Astrocyte of the spinal cord (primary cell): ENCODE measurements at regions of chr2 and their contacts with region 1.

Region 1: DNA sequence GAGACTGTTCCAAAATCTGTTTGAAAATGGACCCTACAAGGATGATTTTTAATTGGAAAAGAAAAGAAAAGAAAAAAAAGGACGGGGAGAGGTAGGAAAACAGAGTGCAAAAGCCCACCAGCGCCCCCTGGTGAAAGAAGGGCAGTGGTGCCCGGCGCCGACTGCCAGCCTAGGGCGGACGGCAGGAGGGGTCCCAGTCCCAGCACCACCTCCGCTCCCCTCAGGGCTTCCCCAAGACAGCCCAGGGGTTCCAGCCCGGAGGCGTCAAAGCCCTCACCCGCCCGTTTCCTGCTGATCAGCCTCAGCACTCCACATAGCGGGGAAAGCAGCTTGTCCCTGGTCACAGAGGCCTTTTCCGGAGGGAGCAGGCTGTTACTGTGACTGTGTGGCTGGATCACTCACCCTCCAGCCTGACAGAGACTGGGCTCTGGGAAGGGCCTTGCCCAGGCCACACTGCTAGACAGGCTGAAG is 213.9 kb downstream of the TFCP2L1 start:
- DNase-seq: peak; percentile 51
- H3K4me3 ChIP-seq: no peak overlapping the region
- CTCF ChIP-seq: peak; percentile 98

Region 2: DNA sequence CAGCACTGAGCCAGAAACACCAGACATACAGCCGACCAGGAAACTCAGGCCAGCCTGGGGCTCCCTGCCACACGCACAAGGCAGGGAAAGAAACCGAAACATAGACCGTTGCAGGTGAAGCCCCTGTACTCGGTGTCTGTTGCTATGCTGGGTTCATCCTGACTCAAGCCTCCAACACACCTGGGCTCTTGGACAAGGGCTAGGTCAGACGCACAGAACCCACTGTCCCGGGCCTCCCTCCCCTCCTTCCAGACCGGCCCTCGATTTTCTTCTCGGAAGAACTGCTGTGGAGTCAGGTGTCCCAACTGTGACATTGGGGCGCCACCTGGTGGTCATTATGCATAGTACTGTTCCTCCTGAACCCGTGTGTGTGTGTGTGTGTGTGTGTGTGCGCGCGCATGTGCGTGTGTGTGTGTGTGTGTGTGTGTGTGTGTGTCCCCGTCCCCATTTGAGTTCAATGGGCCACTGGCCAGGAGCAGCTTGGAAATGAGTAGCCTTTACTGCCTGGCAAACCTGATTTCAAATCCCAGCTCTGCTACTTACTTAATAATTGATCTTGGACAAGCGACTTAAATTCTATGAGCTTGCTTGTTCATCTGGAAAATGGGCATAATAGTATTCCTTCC is 390.8 kb before region 1 on chr2:
- in situ Hi-C with region 1: loop called (anchors 25 kb)
- DNase-seq: peak; percentile 83
- H3K4me3 ChIP-seq: no peak overlapping the region
- CTCF ChIP-seq: peak; percentile 65

Region 3: GRCh38 chr2:121469356-121469755 is 398.3 kb after region 1 on chr2:
- in situ Hi-C with region 1: no loop called
- DNase-seq: no peak
- H3K4me3 ChIP-seq: no peak overlapping the region
- CTCF ChIP-seq: no peak